Right ventricle myocardium superior (tissue), 1 donor: ENCODE measurements at regions of chr11 and their contacts with region 1.

Region 1: GRCh38 chr11:117217141-117218084 is 14.5 kb downstream of the PCSK7 start:
- DNase-seq: no peak
- ATAC-seq: no peak

Region 2: DNA sequence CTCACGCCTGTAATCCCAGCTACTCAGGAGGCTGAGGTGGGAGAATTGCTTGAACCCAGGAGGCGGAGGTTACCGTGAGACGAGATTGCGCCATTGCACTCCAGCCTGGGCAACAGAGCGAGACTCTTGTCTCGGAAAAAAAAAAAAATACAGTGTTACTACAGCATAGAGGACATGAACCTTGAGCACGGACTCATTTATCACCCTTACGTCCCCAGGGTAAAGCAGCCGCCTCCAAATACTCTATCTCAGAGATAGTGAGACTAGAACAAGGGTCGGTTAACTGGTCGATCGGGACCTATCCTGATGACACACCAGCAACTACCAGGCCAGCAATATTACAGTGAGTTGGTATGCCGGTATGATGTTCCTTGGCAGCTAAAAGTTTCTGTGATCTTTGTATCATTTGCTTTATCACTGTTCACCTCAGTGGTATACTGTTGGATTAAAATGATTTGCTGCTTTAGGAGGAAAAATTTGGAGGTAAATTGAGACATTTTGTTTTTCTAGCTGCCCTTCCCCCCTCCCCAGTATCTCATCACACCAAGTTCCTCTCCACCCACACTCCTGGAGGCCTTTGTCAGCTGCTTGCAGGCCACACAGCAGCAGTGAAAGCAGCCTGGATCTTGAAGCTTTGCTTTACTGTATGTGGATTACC is 45.9 kb before region 1 on chr11:
- intact Hi-C with region 1: no loop called
- DNase-seq: no peak
- ATAC-seq: peak; percentile 38

Region 3: GRCh38 chr11:117199061-117199915 is 18.1 kb before region 1 on chr11 and contains the start of gene TAGLN:
- intact Hi-C with region 1: loop called (anchors 2 kb)
- DNase-seq: peak; percentile 86
- ATAC-seq: peak; percentile 66
- total RNA-seq, gene TAGLN: 91.4 TPM